Activated B cell treated with CpG ODN at 0.5 μM for 24 hours (primary cell): ENCODE measurements at regions of chr5 and their contacts with region 1.

Region 1: DNA sequence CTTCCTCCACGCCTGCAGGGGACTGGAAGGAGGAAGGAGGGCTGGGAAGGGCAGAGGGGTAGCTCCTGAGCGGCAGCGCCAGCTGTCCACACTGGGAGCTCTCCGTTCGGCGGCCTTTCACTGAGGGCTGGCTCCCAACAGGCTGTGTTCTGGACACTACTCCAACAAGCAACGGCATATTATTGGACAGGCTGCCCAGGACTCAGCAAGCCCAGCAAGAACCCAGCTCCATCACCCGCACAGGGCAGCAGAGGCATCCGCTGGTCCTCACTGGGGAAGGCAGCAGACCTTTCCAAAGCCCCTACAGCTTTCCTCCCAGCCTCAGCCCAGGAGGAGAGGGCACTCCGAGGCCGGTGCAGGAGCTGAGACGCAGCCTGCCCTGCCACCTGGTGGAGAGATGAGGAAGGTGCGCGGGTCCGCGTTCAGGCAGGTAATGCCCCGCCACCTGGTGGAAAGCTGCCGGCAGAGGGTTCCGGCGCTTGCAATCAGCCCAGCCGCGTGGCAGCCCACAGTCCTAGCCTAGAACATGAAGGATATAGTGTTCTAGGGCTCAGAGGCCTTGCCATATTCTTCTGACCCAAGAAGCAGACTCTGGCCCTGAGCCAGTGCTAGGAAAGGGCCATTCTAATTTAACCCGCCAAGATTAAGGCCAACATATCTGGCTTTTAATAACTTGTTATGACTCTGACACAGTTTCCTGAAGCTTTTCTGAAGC is 74.4 kb downstream of the NRG2 start:
- DNase-seq: peak; percentile 83
- ATAC-seq: peak; percentile 100
- H3K4me3 Mint-ChIP-seq: no peak overlapping the region
- H3K27ac Mint-ChIP-seq: no peak overlapping the region
- H3K4me1 Mint-ChIP-seq: no peaks in the 10 kb centered on the region
- H3K27me3 Mint-ChIP-seq: peaks cover 32% of the 10 kb centered on the region
- CTCF ChIP-seq: peak; percentile 47

Region 2: GRCh38 chr5:139696894-139697658 is 271.6 kb before region 1 on chr5:
- CTCF ChIA-PET with region 1: no interaction called
- POLR2A ChIA-PET with region 1: no interaction called
- intact Hi-C with region 1: loop called (anchors 10 kb)
- DNase-seq: no peak
- ATAC-seq: peak; percentile 45
- H3K4me3 Mint-ChIP-seq: peak overlapping the region; percentile 78
- H3K27ac Mint-ChIP-seq: peak overlapping the region; percentile 61
- H3K4me1 Mint-ChIP-seq: peaks cover 53% of the 10 kb centered on the region
- H3K27me3 Mint-ChIP-seq: peaks cover 15% of the 10 kb centered on the region
- CTCF ChIP-seq: no peak

Region 3: GRCh38 chr5:139844472-139845145 is 124.1 kb before region 1 on chr5:
- CTCF ChIA-PET with region 1: interaction called, 5 read pairs
- POLR2A ChIA-PET with region 1: no interaction called
- intact Hi-C with region 1: loop called (anchors 5 kb)
- DNase-seq: peak; percentile 57
- ATAC-seq: peak; percentile 40
- H3K4me3 Mint-ChIP-seq: peak overlapping the region; percentile 5
- H3K27ac Mint-ChIP-seq: no peak overlapping the region
- H3K4me1 Mint-ChIP-seq: peaks cover 16% of the 10 kb centered on the region
- H3K27me3 Mint-ChIP-seq: peaks cover 13% of the 10 kb centered on the region
- CTCF ChIP-seq: peak; percentile 61

Region 4: DNA sequence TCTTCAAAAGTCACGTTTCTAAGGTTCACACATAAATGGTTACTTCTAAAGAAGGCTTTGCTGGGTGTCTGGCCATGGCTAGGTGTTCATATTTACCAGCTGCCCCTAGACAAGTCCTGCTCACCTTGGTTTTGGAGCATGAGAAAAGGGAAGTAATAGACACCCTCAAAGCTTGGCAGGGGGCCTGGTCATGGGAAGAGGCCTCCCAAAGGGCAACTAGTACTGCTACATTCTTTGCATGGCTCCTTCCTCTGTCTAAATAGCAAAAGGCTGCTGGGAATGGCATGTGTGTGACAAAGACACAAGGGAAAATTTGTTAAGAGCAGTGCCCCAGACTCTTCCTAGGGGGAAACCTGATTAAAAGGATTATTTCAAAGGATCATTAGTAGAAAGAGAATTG is 19.0 kb before region 1 on chr5:
- CTCF ChIA-PET with region 1: interaction called, 11 read pairs
- POLR2A ChIA-PET with region 1: no interaction called
- intact Hi-C with region 1: no loop called
- DNase-seq: no peak
- ATAC-seq: no peak
- H3K4me3 Mint-ChIP-seq: no peak overlapping the region
- H3K27ac Mint-ChIP-seq: no peak overlapping the region
- H3K4me1 Mint-ChIP-seq: peaks cover 20% of the 10 kb centered on the region
- H3K27me3 Mint-ChIP-seq: peaks cover 26% of the 10 kb centered on the region
- CTCF ChIP-seq: no peak

Region 5: GRCh38 chr5:140157032-140157803 is 188.5 kb after region 1 on chr5:
- CTCF ChIA-PET with region 1: interaction called, 3 read pairs
- POLR2A ChIA-PET with region 1: no interaction called
- intact Hi-C with region 1: loop called (anchors 1 kb)
- DNase-seq: peak; percentile 75
- ATAC-seq: peak; percentile 100
- H3K4me3 Mint-ChIP-seq: peak overlapping the region; percentile 66
- H3K27ac Mint-ChIP-seq: no peak overlapping the region
- H3K4me1 Mint-ChIP-seq: peaks cover 10% of the 10 kb centered on the region
- H3K27me3 Mint-ChIP-seq: no peaks in the 10 kb centered on the region
- CTCF ChIP-seq: no peak